ENCODE measurements at regions of chr21 and their contacts with region 1.

Region 1: DNA sequence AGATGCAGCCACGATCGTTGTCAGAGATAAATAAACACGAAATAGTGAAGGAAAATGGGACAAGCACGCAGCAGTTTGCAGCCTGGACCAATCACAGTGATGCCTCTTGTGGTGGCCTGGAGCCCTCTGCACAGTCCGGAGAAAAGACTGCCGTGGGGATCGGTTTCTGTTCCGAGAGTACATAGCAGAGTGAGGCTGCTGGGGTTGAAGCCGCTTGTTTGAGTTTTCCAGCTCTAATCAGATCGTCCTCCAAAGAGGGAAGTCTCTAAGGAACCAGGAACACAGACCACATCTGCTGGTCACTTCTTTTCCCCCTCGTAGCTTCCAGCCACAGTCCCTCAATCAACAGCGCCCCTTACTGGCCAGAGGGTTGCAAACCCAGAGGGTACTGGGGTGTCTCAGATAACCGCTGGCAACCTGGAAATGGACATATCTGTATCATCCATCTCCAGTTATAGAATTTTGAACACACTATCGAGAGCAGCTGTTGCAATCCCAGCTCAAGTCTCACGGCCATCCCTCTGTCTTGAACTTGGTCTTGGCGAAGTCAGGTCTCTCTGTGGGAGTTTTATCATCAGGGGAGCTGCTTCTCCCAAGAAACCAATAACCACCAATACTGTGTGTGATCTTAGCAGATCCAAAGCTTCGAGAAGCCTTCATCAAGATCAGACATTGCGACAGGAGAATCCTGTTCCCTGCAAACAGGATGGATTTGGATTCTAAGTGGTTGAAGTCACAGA is 57.4 kb downstream of the OLIG1 start:
- DNase-seq: peak; percentile 10 to 74 (median 61)
- ATAC-seq: peak; percentile 38
- H3K4me3 ChIP-seq: peak overlapping the region; percentile 22 to 32
- H3K4me3 Mint-ChIP-seq: peak overlapping the region; percentile 74
- H3K27ac ChIP-seq: no peak overlapping the region
- H3K27ac Mint-ChIP-seq: no peak overlapping the region
- H3K4me1 ChIP-seq: no peaks in the 10 kb centered on the region
- H3K4me1 Mint-ChIP-seq: peaks cover 9% of the 10 kb centered on the region
- H3K27me3 ChIP-seq: peaks cover 0 to 3% of the 10 kb centered on the region in 2 experiments
- H3K27me3 Mint-ChIP-seq: peaks cover 26% of the 10 kb centered on the region
- CTCF ChIP-seq: peak; percentile 56

Region 2: DNA sequence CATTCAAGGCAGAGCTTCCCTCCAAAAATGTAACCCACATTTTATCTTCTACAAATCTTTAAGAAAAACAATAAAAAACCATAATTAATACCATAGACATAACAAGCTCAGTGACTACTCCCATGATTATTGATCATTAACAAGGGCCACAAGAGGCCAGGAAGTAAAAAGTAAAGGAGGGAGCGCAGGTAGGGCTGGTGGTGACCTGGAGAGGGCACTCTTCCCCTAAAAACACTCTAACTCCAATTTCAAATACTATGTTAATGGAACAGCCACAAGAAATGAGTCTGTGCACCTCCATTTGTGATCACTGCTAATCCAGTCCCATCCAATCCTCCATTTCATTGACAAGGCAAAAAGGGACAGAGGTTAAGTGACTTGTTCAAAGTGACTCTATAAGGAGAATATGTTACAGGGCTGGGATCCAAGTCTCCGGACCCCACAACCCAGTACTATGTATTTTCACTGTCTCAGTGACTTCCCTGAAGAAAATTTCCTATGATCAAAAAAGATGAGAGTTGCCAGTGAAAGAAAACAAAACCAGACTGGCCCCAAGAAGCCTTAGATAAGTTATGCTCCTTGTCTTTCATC is 473.9 kb before region 1 on chr21:
- CTCF ChIA-PET with region 1: no interaction called
- POLR2A ChIA-PET with region 1: no interaction called
- intact Hi-C with region 1: loop called in 1 of 2 experiments (anchors 2 kb)
- DNase-seq: peak in 4 of 9 experiments; percentile 12 to 52 (median 31)
- ATAC-seq: peak; percentile 52
- H3K4me3 ChIP-seq: no peak overlapping the region
- H3K4me3 Mint-ChIP-seq: no peak overlapping the region
- H3K27ac ChIP-seq: no peak overlapping the region
- H3K27ac Mint-ChIP-seq: no peak overlapping the region
- H3K4me1 ChIP-seq: no peaks in the 10 kb centered on the region
- H3K4me1 Mint-ChIP-seq: no peaks in the 10 kb centered on the region
- H3K27me3 ChIP-seq: no peaks in the 10 kb centered on the region
- H3K27me3 Mint-ChIP-seq: no peaks in the 10 kb centered on the region
- CTCF ChIP-seq: peak; percentile 62

Region 3: GRCh38 chr21:32921632-32922230 is 205.6 kb before region 1 on chr21:
- CTCF ChIA-PET with region 1: interaction called, 3 read pairs
- POLR2A ChIA-PET with region 1: no interaction called
- intact Hi-C with region 1: loop called in 1 of 2 experiments (anchors 5 kb)
- DNase-seq: peak in 8 of 9 experiments; percentile 26 to 65 (median 45)
- ATAC-seq: no peak
- H3K4me3 ChIP-seq: no peak overlapping the region
- H3K4me3 Mint-ChIP-seq: no peak overlapping the region
- H3K27ac ChIP-seq: no peak overlapping the region
- H3K27ac Mint-ChIP-seq: no peak overlapping the region
- H3K4me1 ChIP-seq: no peaks in the 10 kb centered on the region
- H3K4me1 Mint-ChIP-seq: peaks cover 9% of the 10 kb centered on the region
- H3K27me3 ChIP-seq: no peaks in the 10 kb centered on the region
- H3K27me3 Mint-ChIP-seq: no peaks in the 10 kb centered on the region
- CTCF ChIP-seq: peak; percentile 55

Region 4: GRCh38 chr21:32994305-32994704 is 133.0 kb before region 1 on chr21:
- CTCF ChIA-PET with region 1: interaction called, 7 read pairs
- POLR2A ChIA-PET with region 1: no interaction called
- intact Hi-C with region 1: loop called in 1 of 2 experiments (anchors 2 kb)
- DNase-seq: peak in 1 of 9 experiments; percentile 11
- ATAC-seq: no peak
- H3K4me3 ChIP-seq: no peak overlapping the region
- H3K4me3 Mint-ChIP-seq: no peak overlapping the region
- H3K27ac ChIP-seq: no peak overlapping the region
- H3K27ac Mint-ChIP-seq: no peak overlapping the region
- H3K4me1 ChIP-seq: no peaks in the 10 kb centered on the region
- H3K4me1 Mint-ChIP-seq: no peaks in the 10 kb centered on the region
- H3K27me3 ChIP-seq: no peaks in the 10 kb centered on the region
- H3K27me3 Mint-ChIP-seq: peaks cover 26% of the 10 kb centered on the region
- CTCF ChIP-seq: no peak